ENCODE measurements at regions of chr9 and their contacts with region 1.

Region 1: GRCh38 chr9:83130541-83130940 is 67.6 kb upstream of the RASEF start:
- DNase-seq: no peak
- ATAC-seq: no peak
- H3K4me3 Mint-ChIP-seq: no peak overlapping the region
- H3K27ac Mint-ChIP-seq: no peak overlapping the region
- H3K4me1 Mint-ChIP-seq: no peaks in the 10 kb centered on the region
- H3K27me3 Mint-ChIP-seq: no peaks in the 10 kb centered on the region
- CTCF ChIP-seq: no peak

Region 2: DNA sequence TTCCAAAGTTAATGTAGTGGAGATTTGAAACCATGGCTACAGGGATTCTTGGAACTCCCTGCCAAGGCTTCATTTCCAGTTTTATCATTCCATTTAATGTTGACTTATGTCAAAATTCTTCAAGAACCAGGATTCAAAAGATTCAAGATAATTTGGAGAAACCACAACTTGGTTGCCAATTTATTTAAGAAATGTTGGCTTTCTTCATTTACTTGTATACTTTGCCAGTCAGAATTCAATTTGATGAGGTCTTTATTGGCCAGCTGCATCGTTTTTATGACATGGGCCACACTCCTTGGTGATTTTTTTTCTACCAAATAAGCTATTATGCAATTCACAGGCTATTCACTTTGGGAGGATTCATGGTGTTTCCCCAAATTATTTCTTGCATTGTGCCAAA is 14.5 kb before region 1 on chr9:
- CTCF ChIA-PET with region 1: no interaction called
- POLR2A ChIA-PET with region 1: no interaction called
- intact Hi-C with region 1: no loop called
- DNase-seq: no peak
- ATAC-seq: no peak
- H3K4me3 Mint-ChIP-seq: no peak overlapping the region
- H3K27ac Mint-ChIP-seq: no peak overlapping the region
- H3K4me1 Mint-ChIP-seq: no peaks in the 10 kb centered on the region
- H3K27me3 Mint-ChIP-seq: no peaks in the 10 kb centered on the region
- CTCF ChIP-seq: no peak

Region 3: GRCh38 chr9:83199243-83199642 is 68.7 kb after region 1 on chr9:
- CTCF ChIA-PET with region 1: no interaction called
- POLR2A ChIA-PET with region 1: no interaction called
- intact Hi-C with region 1: loop called (anchors 10 kb)
- DNase-seq: no peak
- ATAC-seq: no peak
- H3K4me3 Mint-ChIP-seq: no peak overlapping the region
- H3K27ac Mint-ChIP-seq: no peak overlapping the region
- H3K4me1 Mint-ChIP-seq: no peaks in the 10 kb centered on the region
- H3K27me3 Mint-ChIP-seq: peaks cover 9% of the 10 kb centered on the region
- CTCF ChIP-seq: no peak

Region 4: GRCh38 chr9:83392228-83392627 is 261.7 kb after region 1 on chr9:
- CTCF ChIA-PET with region 1: no interaction called
- POLR2A ChIA-PET with region 1: no interaction called
- intact Hi-C with region 1: no loop called
- DNase-seq: no peak
- ATAC-seq: no peak
- H3K4me3 Mint-ChIP-seq: no peak overlapping the region
- H3K27ac Mint-ChIP-seq: no peak overlapping the region
- H3K4me1 Mint-ChIP-seq: no peaks in the 10 kb centered on the region
- H3K27me3 Mint-ChIP-seq: peaks cover 2% of the 10 kb centered on the region
- CTCF ChIP-seq: no peak

Measured in activated B cell treated with CpG ODN at 0.5 μM for 24 hours (primary cell).